SK-N-SH (cell line): ENCODE measurements at regions of chr1 and their contacts with region 1.

Region 1: DNA sequence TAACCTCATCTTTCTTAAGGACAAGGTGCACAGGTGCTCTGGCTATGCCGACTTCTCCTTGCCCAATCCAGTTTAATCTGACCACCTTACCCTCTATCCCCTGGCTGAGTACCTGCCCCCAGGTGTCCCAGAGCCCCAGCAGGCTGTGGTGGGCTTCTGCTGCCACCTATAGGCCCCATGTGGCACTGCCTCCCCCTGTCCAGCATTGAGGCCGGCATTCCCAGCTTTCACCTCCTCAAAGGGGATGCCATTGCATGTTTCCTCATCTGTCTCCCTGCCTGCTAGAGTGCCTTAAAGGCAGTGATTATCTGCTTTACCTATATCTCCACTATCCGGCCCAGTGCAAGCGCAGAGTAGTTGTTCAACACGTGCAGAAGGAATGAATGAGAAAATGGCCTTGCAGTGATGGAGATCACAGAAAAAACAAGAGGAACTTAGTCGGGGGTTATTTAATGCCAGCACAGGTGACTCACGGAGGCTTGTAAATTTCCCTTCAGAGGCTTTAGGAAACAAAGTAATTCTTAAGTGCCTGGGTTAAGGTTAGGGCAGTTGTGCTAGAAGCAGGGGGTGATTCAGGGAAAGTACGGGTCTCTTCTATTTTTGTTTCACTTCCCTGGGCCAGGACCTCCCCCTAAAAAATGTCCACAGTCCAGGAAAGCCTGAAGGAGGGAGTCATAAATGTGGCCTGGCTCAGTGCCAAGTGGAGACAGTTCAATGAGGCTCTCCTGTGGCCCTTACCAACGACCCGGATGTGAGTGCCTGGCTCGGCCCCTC is 131.8 kb upstream of the NGF start:
- DNase-seq: peak; percentile 77
- H3K4me3 ChIP-seq: peak overlapping the region in 1 of 2 experiments; percentile 50; a peak in 1 of 4 replicates
- H3K27ac ChIP-seq: peak overlapping the region in 1 of 2 experiments; percentile 64; a peak in 3 of 4 replicates
- H3K4me1 ChIP-seq: peaks cover 8 to 9% of the 10 kb centered on the region in 2 experiments; a peak in 1 of 4 replicates
- H3K27me3 ChIP-seq: no peaks in the 10 kb centered on the region
- CTCF ChIP-seq: peak; percentile 97
- EP300 ChIP-seq: no peak
- RAD21 ChIP-seq: peak; percentile 95

Region 2: GRCh38 chr1:115133440-115133839 is 336.4 kb before region 1 on chr1:
- CTCF ChIA-PET with region 1: interaction called, 280 read pairs
- POLR2A ChIA-PET with region 1: no interaction called
- DNase-seq: no peak
- H3K4me3 ChIP-seq: no peak overlapping the region
- H3K27ac ChIP-seq: peak overlapping the region in 1 of 2 experiments; percentile 82; a peak in 2 of 4 replicates
- H3K4me1 ChIP-seq: peaks cover 6 to 25% of the 10 kb centered on the region in 2 experiments; a peak in 3 of 4 replicates
- H3K27me3 ChIP-seq: no peaks in the 10 kb centered on the region
- CTCF ChIP-seq: no peak
- EP300 ChIP-seq: no peak
- RAD21 ChIP-seq: no peak

Region 3: DNA sequence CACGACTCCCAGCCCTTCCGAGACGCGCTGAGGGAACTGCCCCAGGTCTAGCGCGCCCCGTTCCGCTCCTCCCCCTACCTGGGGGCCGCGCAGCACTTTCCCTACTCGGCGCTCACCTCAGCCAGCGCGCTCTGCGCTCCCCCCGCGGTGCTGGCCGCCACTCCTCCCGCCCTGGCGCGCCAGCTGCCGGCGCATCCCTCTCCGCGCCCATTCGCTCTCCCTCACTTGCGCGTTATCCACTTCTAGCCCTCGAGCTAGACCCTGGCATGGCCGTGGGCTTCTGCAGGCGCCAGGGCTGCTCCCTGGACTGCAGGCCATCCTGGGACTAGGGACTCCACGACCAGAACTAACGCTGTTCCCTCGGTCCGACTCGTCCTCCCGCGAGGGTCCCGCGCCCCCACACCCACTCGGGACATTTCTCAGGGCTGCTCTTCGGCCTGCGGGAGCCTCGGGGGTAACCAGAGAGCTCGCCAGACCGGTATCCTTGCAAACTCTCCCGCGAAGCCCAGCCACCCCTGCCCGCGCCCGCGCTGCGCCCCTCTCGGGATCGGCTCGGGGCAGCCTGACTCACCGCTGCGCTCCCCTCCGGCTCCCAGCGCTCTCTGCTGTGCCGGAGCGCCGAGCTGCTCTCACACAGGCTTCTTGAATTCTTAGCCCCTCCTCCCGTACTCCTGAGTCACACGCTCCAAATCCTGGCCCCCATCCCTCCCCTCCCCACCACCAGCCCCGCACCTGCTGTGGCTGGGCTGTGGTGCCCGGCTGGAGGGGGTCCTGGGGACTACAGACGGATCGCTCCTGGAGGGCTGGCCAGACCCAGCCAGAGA is 132.0 kb before region 1 on chr1 and contains the start of gene NGF:
- CTCF ChIA-PET with region 1: interaction called, 16 read pairs
- POLR2A ChIA-PET with region 1: no interaction called
- DNase-seq: peak; percentile 83
- H3K4me3 ChIP-seq: peak within 1 kb of the TSS; percentile 84 to 92
- H3K27ac ChIP-seq: peak within 1 kb of the TSS; percentile 28 to 68; a peak in 3 of 4 replicates
- H3K4me1 ChIP-seq: peaks cover 23% of the 10 kb centered on the region in 2 experiments
- H3K27me3 ChIP-seq: no peaks in the 10 kb centered on the region
- CTCF ChIP-seq: no peak; the same call in 1 of the 2 replicates
- EP300 ChIP-seq: no peak
- RAD21 ChIP-seq: 0 out of 2 replicates have a peak, but pooled peaks have one; percentile 3
- polyA plus RNA-seq, gene NGF: 53.7 and 75.8 TPM in 2 replicates

Region 4: GRCh38 chr1:115364046-115364775 is 105.7 kb before region 1 on chr1:
- CTCF ChIA-PET with region 1: interaction called, 12 read pairs
- POLR2A ChIA-PET with region 1: no interaction called
- DNase-seq: peak; percentile 57
- H3K4me3 ChIP-seq: no peak overlapping the region
- H3K27ac ChIP-seq: peak overlapping the region; percentile 61 to 94
- H3K4me1 ChIP-seq: peaks cover 10 to 27% of the 10 kb centered on the region in 2 experiments; a peak in 3 of 4 replicates
- H3K27me3 ChIP-seq: no peaks in the 10 kb centered on the region
- CTCF ChIP-seq: no peak
- EP300 ChIP-seq: no peak
- RAD21 ChIP-seq: no peak

Region 5: GRCh38 chr1:115506926-115507589 is 37.2 kb after region 1 on chr1:
- CTCF ChIA-PET with region 1: interaction called, 15 read pairs
- POLR2A ChIA-PET with region 1: no interaction called
- DNase-seq: peak; percentile 52
- H3K4me3 ChIP-seq: no peak overlapping the region; a peak in 1 of 4 replicates
- H3K27ac ChIP-seq: no peak overlapping the region
- H3K4me1 ChIP-seq: peaks cover 0 to 3% of the 10 kb centered on the region in 2 experiments; a peak in 2 of 4 replicates
- H3K27me3 ChIP-seq: no peaks in the 10 kb centered on the region
- CTCF ChIP-seq: peak; percentile 62
- EP300 ChIP-seq: no peak
- RAD21 ChIP-seq: peak; percentile 82

Region 6: DNA sequence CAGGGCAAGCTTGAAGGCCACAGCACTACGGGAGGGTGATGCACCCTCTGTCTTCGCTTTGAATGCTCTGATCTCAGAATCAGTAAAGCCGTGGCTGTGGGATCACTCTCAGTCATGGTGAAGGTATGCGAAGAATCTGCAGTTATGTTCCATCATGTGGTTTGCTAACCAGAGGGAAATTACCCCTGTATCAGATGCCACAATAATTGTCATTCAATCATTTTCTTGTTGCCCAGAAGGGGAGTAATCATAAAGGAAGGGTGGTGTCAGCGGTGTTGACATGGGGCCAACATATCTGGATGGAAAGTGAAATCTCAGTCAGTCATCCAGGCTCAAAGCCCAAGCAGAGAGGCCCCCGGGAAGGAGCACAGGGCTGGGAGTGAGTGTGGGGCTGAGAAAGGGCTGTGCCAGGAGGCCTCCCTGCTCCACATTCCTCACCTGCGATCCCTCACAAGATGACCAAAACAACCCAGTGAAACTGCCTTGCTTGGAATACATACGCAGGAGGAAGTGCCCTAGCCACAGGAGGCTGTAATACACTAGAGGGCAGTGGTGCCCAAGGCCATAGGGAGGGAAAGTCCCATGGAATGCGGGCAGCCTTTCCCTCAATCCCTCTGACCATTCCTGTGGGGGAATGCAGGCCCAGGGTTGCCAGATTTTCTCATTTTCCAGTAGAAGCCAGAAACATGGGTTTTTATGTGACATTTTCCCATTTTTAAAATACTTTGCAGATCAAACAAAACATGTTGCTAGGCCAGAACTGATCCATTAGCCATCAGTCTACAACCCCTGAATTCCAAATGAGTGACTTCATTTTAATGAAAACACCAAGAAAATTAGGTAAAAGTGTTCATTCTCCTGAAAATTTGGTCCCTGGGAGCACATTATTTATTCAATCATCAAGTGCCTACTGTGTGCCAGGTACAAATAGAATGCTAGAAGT is 76.2 kb after region 1 on chr1:
- CTCF ChIA-PET with region 1: no interaction called
- POLR2A ChIA-PET with region 1: no interaction called
- DNase-seq: peak; percentile 55
- H3K4me3 ChIP-seq: peak overlapping the region in 1 of 2 experiments; percentile 33; a peak in 1 of 4 replicates
- H3K27ac ChIP-seq: peak overlapping the region; percentile 67 to 93; a peak in 3 of 4 replicates
- H3K4me1 ChIP-seq: peaks cover 0 to 13% of the 10 kb centered on the region in 2 experiments; a peak in 3 of 4 replicates
- H3K27me3 ChIP-seq: no peaks in the 10 kb centered on the region
- CTCF ChIP-seq: peak; percentile 80
- EP300 ChIP-seq: peak; percentile 30 to 87; a peak in 2 of 4 replicates
- RAD21 ChIP-seq: peak; percentile 76